CD14-positive monocyte (primary cell): ENCODE measurements at regions of chr4 and their contacts with region 1.

Region 1: DNA sequence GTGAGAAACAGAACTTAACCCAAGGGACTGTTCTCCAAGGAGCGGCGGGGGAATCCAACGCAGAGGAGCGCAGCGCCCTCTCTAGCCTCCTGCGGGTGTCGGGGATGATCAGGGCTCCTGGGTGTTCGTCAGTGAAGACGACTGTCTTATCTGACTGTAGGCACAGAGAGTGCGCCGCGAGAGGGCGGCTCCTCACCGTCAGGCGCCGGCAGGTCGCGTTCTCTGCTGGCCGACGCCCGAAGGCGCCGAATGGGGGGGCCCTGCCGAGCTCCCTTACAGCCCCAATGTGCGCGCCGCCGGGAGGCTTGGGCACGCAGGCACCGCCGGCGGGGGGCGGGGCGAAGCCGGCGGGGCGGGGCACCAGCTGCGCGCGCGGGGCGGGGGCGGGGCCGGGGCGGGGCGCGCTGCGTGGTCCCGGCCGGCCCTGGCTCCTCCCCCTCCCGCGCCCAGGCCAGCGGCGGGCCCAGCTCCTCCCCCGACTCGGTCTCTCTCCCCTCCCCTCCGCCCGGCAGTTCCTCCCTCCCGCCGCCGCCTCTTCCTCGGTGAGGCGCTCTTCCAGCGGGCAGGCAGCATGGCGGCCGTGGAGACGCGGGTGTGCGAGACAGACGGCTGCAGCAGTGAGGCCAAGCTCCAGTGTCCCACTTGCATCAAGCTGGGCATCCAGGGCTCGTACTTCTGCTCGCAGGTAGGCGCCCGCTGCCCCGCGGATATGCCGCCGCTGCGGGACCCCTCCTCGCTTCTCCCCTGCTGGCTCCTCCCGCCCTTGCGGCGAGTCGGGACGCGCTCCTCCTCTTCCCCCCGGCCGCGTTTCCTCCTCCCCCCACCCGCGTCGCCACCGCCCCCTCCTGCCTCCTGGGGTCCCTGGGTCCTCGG is at the start of gene METAP1:
- DNase-seq: peak; percentile 91 to 94 (median 91)
- H3K4me3 ChIP-seq: peak within 1 kb of the TSS; percentile 84 to 93 (median 89)
- H3K4me3 Mint-ChIP-seq: peak within 1 kb of the TSS; percentile 88 to 93
- H3K27ac ChIP-seq: peak within 1 kb of the TSS; percentile 54 to 91
- H3K27ac Mint-ChIP-seq: peak within 1 kb of the TSS; percentile 87 to 95 (median 93)
- H3K4me1 ChIP-seq: peaks cover 12 to 15% of the 10 kb centered on the region in 2 donors
- H3K4me1 Mint-ChIP-seq: peaks cover 25% of the 10 kb centered on the region
- H3K27me3 ChIP-seq: no peaks in the 10 kb centered on the region
- H3K27me3 Mint-ChIP-seq: peaks cover 0 to 2% (median 2%) of the 10 kb centered on the region in 3 donors
- CTCF ChIP-seq: peak; percentile 55
- polyA plus RNA-seq, gene METAP1: 15.9 to 21.7 (median 20.6) TPM

Region 2: DNA sequence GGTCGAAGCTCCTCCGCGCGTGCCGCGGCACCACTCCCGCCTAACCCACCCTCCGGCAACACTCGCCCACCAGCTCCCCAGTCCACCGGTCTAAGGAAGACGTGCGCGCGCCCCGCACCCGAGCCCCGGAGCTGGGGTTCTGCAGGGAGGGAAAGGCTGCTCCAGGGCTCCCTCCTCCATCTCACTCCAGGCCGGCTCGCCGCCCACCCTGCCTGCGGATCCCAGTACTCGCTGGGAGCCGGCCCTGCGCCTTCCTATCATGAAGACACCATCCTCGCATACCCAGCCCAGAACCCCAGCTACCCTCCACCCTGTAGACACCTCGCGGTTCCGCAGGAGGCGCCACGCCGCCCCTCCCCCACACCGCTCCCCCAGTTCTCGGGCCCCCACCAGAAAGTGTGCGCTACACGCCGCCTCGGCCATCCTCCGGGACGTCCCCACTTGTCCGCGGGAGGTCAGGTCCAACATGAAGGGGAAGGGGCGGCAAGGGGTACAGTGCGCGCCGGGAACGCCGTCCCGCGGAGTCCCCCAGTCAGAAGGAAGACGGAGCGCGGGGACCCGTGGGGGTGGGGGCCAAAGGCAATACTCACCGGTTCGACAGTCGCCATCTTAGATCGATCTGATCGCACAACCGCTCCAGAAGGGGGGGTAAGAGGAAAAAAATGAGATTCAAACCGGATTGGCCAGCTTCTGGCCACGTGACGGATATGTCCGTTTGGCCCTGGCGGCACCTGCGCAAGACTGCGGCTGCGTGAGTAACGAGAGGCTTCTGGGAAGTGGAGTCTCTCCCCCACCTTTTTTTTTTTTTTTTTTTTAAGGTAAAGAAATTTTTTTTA is 66.7 kb before region 1 on chr4 and contains the start of gene EIF4E:
- intact Hi-C with region 1: loop called (anchors 5 to 10 kb)
- DNase-seq: peak; percentile 97 to 98 (median 97)
- H3K4me3 ChIP-seq: peak within 1 kb of the TSS; percentile 67 to 100 (median 76)
- H3K4me3 Mint-ChIP-seq: peak within 1 kb of the TSS; percentile 94 to 100
- H3K27ac ChIP-seq: peak within 1 kb of the TSS; percentile 99 to 100
- H3K27ac Mint-ChIP-seq: peak within 1 kb of the TSS; percentile 99 to 100 (median 99)
- H3K4me1 ChIP-seq: peaks cover 33 to 50% of the 10 kb centered on the region in 2 donors
- H3K4me1 Mint-ChIP-seq: peaks cover 44% of the 10 kb centered on the region
- H3K27me3 ChIP-seq: no peaks in the 10 kb centered on the region
- H3K27me3 Mint-ChIP-seq: peaks cover 0 to 2% (median 0%) of the 10 kb centered on the region in 3 donors
- CTCF ChIP-seq: peak; percentile 16
- polyA plus RNA-seq, gene EIF4E: 25.0 to 50.8 (median 48.6) TPM

Region 3: GRCh38 chr4:98950925-98951324 is 44.5 kb before region 1 on chr4:
- intact Hi-C with region 1: no loop called
- DNase-seq: peak in 1 of 3 donors; percentile 15
- H3K4me3 ChIP-seq: no peak overlapping the region
- H3K4me3 Mint-ChIP-seq: no peak overlapping the region
- H3K27ac ChIP-seq: no peak overlapping the region
- H3K27ac Mint-ChIP-seq: no peak overlapping the region
- H3K4me1 ChIP-seq: no peaks in the 10 kb centered on the region
- H3K4me1 Mint-ChIP-seq: no peaks in the 10 kb centered on the region
- H3K27me3 ChIP-seq: no peaks in the 10 kb centered on the region
- H3K27me3 Mint-ChIP-seq: peaks cover 1 to 3% (median 2%) of the 10 kb centered on the region in 3 donors
- CTCF ChIP-seq: no peak

Region 4: DNA sequence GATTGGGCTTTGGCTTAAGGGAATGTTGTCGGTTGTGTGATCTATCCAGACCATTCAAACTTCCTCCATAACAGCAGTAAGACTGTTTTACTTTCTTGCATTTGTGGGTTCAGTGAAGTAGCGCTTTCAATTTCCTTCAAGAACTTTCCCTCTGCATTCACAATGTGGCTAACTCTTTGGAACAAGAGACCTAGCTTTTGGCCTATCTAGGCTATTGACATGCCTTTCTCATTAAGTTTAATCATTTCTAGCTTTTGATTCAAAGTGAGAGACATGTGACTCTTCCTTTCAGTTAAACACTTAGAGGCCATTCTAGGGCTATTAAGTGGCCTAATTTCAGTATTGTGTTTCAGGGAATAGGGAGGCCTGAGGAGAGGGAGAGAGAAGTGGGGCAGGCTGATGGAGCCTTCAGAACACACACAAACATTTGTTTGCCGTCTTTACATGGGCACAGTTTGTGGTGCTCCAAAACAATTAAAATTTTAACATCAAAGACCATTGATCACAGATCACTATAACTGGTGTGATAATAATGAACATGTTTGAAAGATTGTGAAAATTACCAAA is 59.1 kb after region 1 on chr4:
- intact Hi-C with region 1: loop called in 1 of 2 experiments (anchors 2 kb)
- DNase-seq: no peak
- H3K4me3 ChIP-seq: no peak overlapping the region
- H3K4me3 Mint-ChIP-seq: no peak overlapping the region
- H3K27ac ChIP-seq: no peak overlapping the region
- H3K27ac Mint-ChIP-seq: no peak overlapping the region
- H3K4me1 ChIP-seq: no peaks in the 10 kb centered on the region
- H3K4me1 Mint-ChIP-seq: peaks cover 4% of the 10 kb centered on the region
- H3K27me3 ChIP-seq: no peaks in the 10 kb centered on the region
- H3K27me3 Mint-ChIP-seq: no peaks in the 10 kb centered on the region
- CTCF ChIP-seq: no peak